ENCODE measurements at regions of chr7 and their contacts with region 1.

Region 1: GRCh38 chr7:123635551-123636359 is 19.9 kb upstream of the LMOD2 start:
- DNase-seq: no peak
- ATAC-seq: peak; percentile 61

Region 2: GRCh38 chr7:123557398-123558288 is 78.1 kb before region 1 on chr7 and contains the start of gene NDUFA5:
- intact Hi-C with region 1: loop called (anchors 5 kb)
- DNase-seq: peak; percentile 95
- ATAC-seq: peak; percentile 99
- total RNA-seq, gene NDUFA5: 307 TPM

Region 3: GRCh38 chr7:123598657-123599056 is 37.1 kb before region 1 on chr7:
- intact Hi-C with region 1: loop called (anchors 1 kb)
- DNase-seq: no peak
- ATAC-seq: no peak

Region 4: DNA sequence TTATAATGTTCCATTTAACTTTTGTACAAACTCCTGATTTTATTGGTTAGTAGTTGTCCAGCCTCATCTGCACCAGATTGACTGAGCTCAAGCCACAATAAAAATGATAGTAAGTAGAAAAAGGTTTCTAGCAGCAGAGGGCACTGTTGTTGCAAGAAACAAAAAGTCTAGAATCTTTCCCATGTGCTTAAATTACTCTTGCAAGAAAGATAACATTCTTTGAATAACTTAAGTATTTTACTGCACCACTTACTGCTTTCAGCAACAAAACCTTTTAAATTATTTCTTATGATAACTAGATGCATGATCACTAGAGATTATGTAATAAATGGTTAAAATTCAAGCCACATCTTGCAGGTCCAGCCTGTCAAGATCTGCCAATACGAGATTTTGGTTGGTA is 46.9 kb after region 1 on chr7:
- intact Hi-C with region 1: loop called (anchors 2 kb)
- DNase-seq: no peak
- ATAC-seq: peak; percentile 45

Region 5: GRCh38 chr7:123748734-123749536 is 113.2 kb after region 1 on chr7 and contains the start of gene WASL:
- intact Hi-C with region 1: loop called (anchors 5 kb)
- DNase-seq: peak; percentile 95
- ATAC-seq: peak; percentile 97
- total RNA-seq, gene WASL: 28.4 TPM